GM12878 (cell line): ENCODE measurements at regions of chr6 and their contacts with region 1.

Region 1: GRCh38 chr6:37018198-37019064 is 13.0 kb downstream of the FGD2 start:
- DNase-seq: peak; percentile 61
- ATAC-seq: peak; percentile 100
- H3K4me3 ChIP-seq: no peak overlapping the region
- H3K27ac ChIP-seq: no peak overlapping the region
- H3K4me1 ChIP-seq: peaks cover 7% of the 10 kb centered on the region; the same call in 1 of the 2 replicates
- H3K27me3 ChIP-seq: no peaks in the 10 kb centered on the region
- CTCF ChIP-seq: peak; percentile 96 to 99 (median 97); a peak in 5 of 6 replicates
- EP300 ChIP-seq: no peak
- POLR2A ChIP-seq: no peak
- RAD21 ChIP-seq: peak; percentile 96

Region 2: GRCh38 chr6:36642913-36643817 is 375.3 kb before region 1 on chr6:
- CTCF ChIA-PET with region 1: no interaction called
- POLR2A ChIA-PET with region 1: no interaction called
- RAD21 ChIA-PET with region 1: no interaction called
- SMC1A ChIA-PET with region 1: no interaction called
- in situ Hi-C with region 1: no loop called
- intact Hi-C with region 1: no loop called
- DNase-seq: no peak
- ATAC-seq: no peak
- H3K4me3 ChIP-seq: no peak overlapping the region
- H3K27ac ChIP-seq: no peak overlapping the region
- H3K4me1 ChIP-seq: peaks cover 12% of the 10 kb centered on the region
- H3K27me3 ChIP-seq: no peaks in the 10 kb centered on the region
- CTCF ChIP-seq: no peak
- EP300 ChIP-seq: no peak
- POLR2A ChIP-seq: no peak
- RAD21 ChIP-seq: no peak

Region 3: DNA sequence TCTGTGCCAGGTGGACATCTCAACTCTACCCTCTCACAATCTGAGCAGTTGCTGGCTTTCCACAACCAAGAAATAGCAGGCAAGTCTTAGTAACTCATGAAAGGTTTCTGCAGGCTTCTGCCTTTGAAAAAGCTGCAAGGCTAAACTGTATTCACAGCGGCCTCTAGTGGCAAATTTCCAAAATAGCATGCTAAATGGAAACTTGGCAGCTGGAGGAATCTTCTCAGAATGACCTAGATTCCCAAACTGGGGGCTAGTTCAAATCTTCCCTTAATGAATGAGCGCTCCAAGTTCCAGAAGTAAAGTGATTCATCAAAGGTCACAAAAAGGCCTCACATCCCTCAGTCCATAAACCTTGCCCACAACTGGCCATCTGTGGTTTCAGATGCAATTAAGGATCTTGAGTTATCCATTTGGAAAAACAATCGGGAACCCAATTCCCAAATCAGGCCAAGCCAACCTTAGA is 167.2 kb before region 1 on chr6:
- CTCF ChIA-PET with region 1: interaction called, 25 read pairs
- POLR2A ChIA-PET with region 1: no interaction called
- RAD21 ChIA-PET with region 1: interaction called, 20 read pairs
- SMC1A ChIA-PET with region 1: interaction called, 11 read pairs
- in situ Hi-C with region 1: no loop called
- intact Hi-C with region 1: no loop called
- DNase-seq: no peak
- ATAC-seq: peak; percentile 46; the same call in 2 of the 3 replicates
- H3K4me3 ChIP-seq: no peak overlapping the region
- H3K27ac ChIP-seq: no peak overlapping the region
- H3K4me1 ChIP-seq: no peaks in the 10 kb centered on the region
- H3K27me3 ChIP-seq: no peaks in the 10 kb centered on the region
- CTCF ChIP-seq: peak; percentile 71 to 79 (median 77)
- EP300 ChIP-seq: no peak
- POLR2A ChIP-seq: no peak
- RAD21 ChIP-seq: peak; percentile 70

Region 4: GRCh38 chr6:36912586-36912985 is 105.8 kb before region 1 on chr6:
- CTCF ChIA-PET with region 1: interaction called, 40 read pairs
- POLR2A ChIA-PET with region 1: no interaction called
- RAD21 ChIA-PET with region 1: interaction called, 7 read pairs
- SMC1A ChIA-PET with region 1: interaction called, 5 read pairs
- in situ Hi-C with region 1: no loop called
- intact Hi-C with region 1: no loop called
- DNase-seq: peak; percentile 72
- ATAC-seq: peak; percentile 97
- H3K4me3 ChIP-seq: no peak overlapping the region
- H3K27ac ChIP-seq: no peak overlapping the region
- H3K4me1 ChIP-seq: peaks cover 20% of the 10 kb centered on the region
- H3K27me3 ChIP-seq: no peaks in the 10 kb centered on the region
- CTCF ChIP-seq: peak in 1 of 3 experiments; percentile 39; a peak in 2 of 6 replicates
- EP300 ChIP-seq: no peak
- POLR2A ChIP-seq: no peak
- RAD21 ChIP-seq: peak; percentile 38; the same call in 1 of the 2 replicates

Region 5: DNA sequence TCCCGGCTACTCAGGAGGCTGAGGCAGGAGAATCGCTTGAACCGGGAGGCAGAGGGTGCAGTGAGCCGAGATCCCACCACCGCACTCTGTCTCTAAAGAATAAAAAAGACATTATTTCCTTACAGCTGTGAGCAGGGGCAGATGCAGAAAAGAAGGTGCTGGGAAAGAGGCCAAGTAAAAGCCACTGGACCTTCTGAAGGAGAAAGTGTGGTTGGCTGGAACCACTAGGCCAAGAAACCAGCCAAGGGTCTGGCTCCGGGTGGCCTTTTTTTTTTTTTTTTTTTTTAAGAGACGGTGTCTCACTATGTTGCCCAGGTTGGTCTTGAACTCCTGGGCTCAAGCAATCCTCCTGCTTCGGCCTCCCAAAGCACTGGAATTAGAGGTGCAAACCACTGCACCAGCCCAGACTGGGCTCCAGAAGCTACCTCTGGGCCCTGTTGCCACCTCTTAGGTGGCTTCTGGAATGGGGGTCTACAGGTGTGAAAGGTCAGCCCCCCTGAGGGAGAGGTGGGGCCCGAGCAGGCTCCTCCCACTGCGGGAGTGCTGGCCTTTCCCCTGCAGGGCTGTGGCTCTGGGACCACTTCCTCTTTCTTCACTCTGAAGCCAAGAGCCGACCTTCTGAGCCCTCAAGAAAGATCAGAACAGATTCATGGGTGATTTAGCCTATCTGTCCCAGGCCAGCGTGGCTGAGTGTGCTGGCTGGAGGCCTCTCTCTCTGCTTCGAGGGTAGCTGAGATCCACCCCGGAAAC is 13.2 kb before region 1 on chr6 and contains the start of gene FGD2:
- CTCF ChIA-PET with region 1: interaction called, 109 read pairs
- POLR2A ChIA-PET with region 1: interaction called, 12 read pairs
- RAD21 ChIA-PET with region 1: interaction called, 78 read pairs
- SMC1A ChIA-PET with region 1: interaction called, 58 read pairs
- in situ Hi-C with region 1: no loop called
- intact Hi-C with region 1: no loop called
- DNase-seq: no peak
- ATAC-seq: peak; percentile 87
- H3K4me3 ChIP-seq: peak within 1 kb of the TSS; percentile 81
- H3K27ac ChIP-seq: peak within 1 kb of the TSS; percentile 88
- H3K4me1 ChIP-seq: peaks cover 38% of the 10 kb centered on the region
- H3K27me3 ChIP-seq: no peaks in the 10 kb centered on the region
- CTCF ChIP-seq: no peak
- EP300 ChIP-seq: peak; percentile 23 to 50; a peak in 1 of 4 replicates
- POLR2A ChIP-seq: peak; percentile 75
- RAD21 ChIP-seq: no peak
- polyA plus RNA-seq, gene FGD2: 5.2 to 11.3 TPM

Region 6: DNA sequence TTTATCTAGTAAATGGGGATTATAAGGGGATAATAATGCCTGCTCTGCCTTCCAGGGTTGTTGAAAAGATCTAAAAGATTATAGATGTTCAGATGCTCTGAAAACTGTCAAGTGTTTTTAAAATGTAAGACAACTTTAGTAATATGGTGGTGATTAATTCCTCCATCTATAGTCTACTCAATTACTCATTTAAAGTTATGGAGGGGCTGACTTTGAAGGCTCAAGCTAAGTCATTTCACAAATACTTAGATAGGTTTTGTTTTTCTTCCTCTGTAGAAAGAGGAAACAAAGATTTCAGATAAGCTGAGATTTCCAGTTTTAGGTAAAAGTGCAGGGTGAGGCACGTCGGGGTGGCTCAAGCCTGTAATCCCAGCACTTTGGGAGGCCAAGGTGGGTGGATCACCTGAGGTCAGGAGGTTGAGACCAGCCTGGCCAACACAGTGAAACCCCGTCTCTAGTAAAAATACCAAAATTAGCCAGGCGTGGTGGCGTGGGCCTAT is 101.0 kb after region 1 on chr6:
- CTCF ChIA-PET with region 1: no interaction called
- POLR2A ChIA-PET with region 1: no interaction called
- RAD21 ChIA-PET with region 1: no interaction called
- SMC1A ChIA-PET with region 1: no interaction called
- in situ Hi-C with region 1: no loop called
- intact Hi-C with region 1: no loop called
- DNase-seq: no peak
- ATAC-seq: no peak
- H3K4me3 ChIP-seq: no peak overlapping the region
- H3K27ac ChIP-seq: no peak overlapping the region
- H3K4me1 ChIP-seq: peaks cover 9% of the 10 kb centered on the region
- H3K27me3 ChIP-seq: no peaks in the 10 kb centered on the region
- CTCF ChIP-seq: no peak
- EP300 ChIP-seq: no peak
- POLR2A ChIP-seq: no peak
- RAD21 ChIP-seq: no peak

Region 7: GRCh38 chr6:37169496-37170272 is 151.3 kb after region 1 on chr6 and contains the start of gene PIM1:
- CTCF ChIA-PET with region 1: interaction called, 110 read pairs
- POLR2A ChIA-PET with region 1: no interaction called
- RAD21 ChIA-PET with region 1: interaction called, 76 read pairs
- SMC1A ChIA-PET with region 1: interaction called, 66 read pairs
- in situ Hi-C with region 1: loop called (anchors 10 kb)
- intact Hi-C with region 1: loop called (anchors 1 kb)
- DNase-seq: peak; percentile 62
- ATAC-seq: peak; percentile 88
- H3K4me3 ChIP-seq: peak within 1 kb of the TSS; percentile 83
- H3K27ac ChIP-seq: peak within 1 kb of the TSS; percentile 65
- H3K4me1 ChIP-seq: peaks cover 16% of the 10 kb centered on the region
- H3K27me3 ChIP-seq: no peaks in the 10 kb centered on the region
- CTCF ChIP-seq: peak in 1 of 3 experiments; percentile 6; a peak in 1 of 6 replicates
- EP300 ChIP-seq: no peak
- POLR2A ChIP-seq: peak; percentile 81
- RAD21 ChIP-seq: no peak
- polyA plus RNA-seq, gene PIM1: 0.66 to 3.0 TPM

Region 8: GRCh38 chr6:37207903-37208456 is 189.5 kb after region 1 on chr6:
- CTCF ChIA-PET with region 1: interaction called, 135 read pairs
- POLR2A ChIA-PET with region 1: no interaction called
- RAD21 ChIA-PET with region 1: interaction called, 31 read pairs
- SMC1A ChIA-PET with region 1: interaction called, 42 read pairs
- in situ Hi-C with region 1: loop called (anchors 10 kb)
- intact Hi-C with region 1: loop called (anchors 1 kb)
- DNase-seq: peak; percentile 28
- ATAC-seq: peak; percentile 96
- H3K4me3 ChIP-seq: no peak overlapping the region
- H3K27ac ChIP-seq: no peak overlapping the region
- H3K4me1 ChIP-seq: peaks cover 3% of the 10 kb centered on the region; the same call in 1 of the 2 replicates
- H3K27me3 ChIP-seq: no peaks in the 10 kb centered on the region
- CTCF ChIP-seq: peak; percentile 87 to 93 (median 87)
- EP300 ChIP-seq: no peak
- POLR2A ChIP-seq: no peak
- RAD21 ChIP-seq: peak; percentile 63